Mammary epithelial cell (primary cell): ENCODE measurements at regions of chr3 and their contacts with region 1.

Region 1: GRCh38 chr3:160956806-160957205 is 148.3 kb downstream of the B3GALNT1 start:
- DNase-seq: peak; percentile 24
- H3K4me3 ChIP-seq: no peak overlapping the region
- H3K27ac ChIP-seq: no peak overlapping the region
- H3K4me1 ChIP-seq: no peaks in the 10 kb centered on the region
- H3K27me3 ChIP-seq: peaks cover 3% of the 10 kb centered on the region
- CTCF ChIP-seq: peak; percentile 43 to 54

Region 2: DNA sequence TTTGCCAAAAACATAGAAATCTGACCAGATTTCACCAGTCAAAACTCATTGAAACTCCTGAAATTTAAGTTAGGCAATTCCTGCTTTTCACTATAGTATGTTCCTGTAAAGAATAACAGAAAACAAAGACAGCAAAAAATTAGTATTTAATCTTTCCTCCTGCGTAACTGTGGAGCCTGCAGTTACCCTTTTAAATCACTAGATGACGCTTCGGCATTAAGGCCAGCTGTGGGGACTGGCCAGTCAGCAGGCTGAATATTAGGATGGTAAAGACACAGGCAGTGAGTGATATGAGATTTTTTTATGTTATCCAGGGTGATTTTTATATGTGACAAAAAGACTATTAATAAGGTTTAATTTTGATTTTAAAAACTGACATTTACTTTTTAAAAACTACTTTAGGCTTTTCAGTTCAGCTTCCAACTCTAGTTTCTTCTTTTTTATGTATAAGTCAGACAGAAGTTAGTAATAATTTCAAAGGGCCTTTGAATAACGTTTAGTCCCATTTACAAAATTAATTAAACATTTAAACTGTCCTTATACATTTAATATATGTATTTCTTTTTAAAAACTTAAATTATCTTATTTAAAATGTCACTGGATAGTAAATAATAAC is 35.7 kb before region 1 on chr3:
- CTCF ChIA-PET with region 1: no interaction called
- dilution Hi-C with region 1: no loop called
- in situ Hi-C with region 1: no loop called
- intact Hi-C with region 1: no loop called
- DNase-seq: peak; percentile 8
- H3K4me3 ChIP-seq: no peak overlapping the region
- H3K27ac ChIP-seq: no peak overlapping the region
- H3K4me1 ChIP-seq: no peaks in the 10 kb centered on the region
- H3K27me3 ChIP-seq: no peaks in the 10 kb centered on the region
- CTCF ChIP-seq: peak; percentile 67 to 79

Region 3: GRCh38 chr3:161096771-161097355 is 140.1 kb after region 1 on chr3:
- CTCF ChIA-PET with region 1: no interaction called
- dilution Hi-C with region 1: no loop called
- in situ Hi-C with region 1: no loop called
- intact Hi-C with region 1: no loop called
- DNase-seq: peak; percentile 11
- H3K4me3 ChIP-seq: no peak overlapping the region
- H3K27ac ChIP-seq: no peak overlapping the region
- H3K4me1 ChIP-seq: no peaks in the 10 kb centered on the region
- H3K27me3 ChIP-seq: no peaks in the 10 kb centered on the region
- CTCF ChIP-seq: peak; percentile 26 to 61

Region 4: DNA sequence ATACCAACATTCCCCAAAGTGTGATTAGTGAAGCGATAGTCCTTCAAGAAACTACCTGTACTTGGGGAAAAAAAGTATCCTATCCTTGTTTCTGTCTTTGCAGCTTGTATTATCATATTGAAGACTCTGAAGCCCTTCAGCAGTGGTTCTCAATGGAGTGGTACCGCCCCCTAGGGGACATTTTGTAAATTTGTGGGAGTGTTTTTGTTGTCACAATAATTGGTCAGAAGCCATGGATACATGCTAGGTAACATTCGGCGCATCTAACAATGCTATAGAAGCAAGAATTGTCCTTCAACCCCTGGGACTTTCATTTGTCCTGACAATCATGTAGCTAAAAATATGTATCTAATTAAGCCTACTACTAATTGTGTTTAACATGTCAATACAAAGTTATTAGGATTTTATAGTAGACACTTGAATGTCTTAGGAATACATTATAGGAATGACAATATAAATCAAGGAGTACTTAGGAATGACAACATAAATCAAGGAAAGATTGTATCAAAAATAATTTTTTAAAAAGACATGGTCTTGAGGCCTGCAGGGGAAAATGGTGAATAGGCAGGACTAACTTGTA is 318.0 kb after region 1 on chr3:
- CTCF ChIA-PET with region 1: interaction called, 5 read pairs
- dilution Hi-C with region 1: no loop called
- in situ Hi-C with region 1: no loop called
- intact Hi-C with region 1: loop called (anchors 2 kb)
- DNase-seq: peak; percentile 55
- H3K4me3 ChIP-seq: no peak overlapping the region
- H3K27ac ChIP-seq: no peak overlapping the region
- H3K4me1 ChIP-seq: peaks cover 5% of the 10 kb centered on the region
- H3K27me3 ChIP-seq: no peaks in the 10 kb centered on the region
- CTCF ChIP-seq: peak; percentile 66 to 80

Region 5: DNA sequence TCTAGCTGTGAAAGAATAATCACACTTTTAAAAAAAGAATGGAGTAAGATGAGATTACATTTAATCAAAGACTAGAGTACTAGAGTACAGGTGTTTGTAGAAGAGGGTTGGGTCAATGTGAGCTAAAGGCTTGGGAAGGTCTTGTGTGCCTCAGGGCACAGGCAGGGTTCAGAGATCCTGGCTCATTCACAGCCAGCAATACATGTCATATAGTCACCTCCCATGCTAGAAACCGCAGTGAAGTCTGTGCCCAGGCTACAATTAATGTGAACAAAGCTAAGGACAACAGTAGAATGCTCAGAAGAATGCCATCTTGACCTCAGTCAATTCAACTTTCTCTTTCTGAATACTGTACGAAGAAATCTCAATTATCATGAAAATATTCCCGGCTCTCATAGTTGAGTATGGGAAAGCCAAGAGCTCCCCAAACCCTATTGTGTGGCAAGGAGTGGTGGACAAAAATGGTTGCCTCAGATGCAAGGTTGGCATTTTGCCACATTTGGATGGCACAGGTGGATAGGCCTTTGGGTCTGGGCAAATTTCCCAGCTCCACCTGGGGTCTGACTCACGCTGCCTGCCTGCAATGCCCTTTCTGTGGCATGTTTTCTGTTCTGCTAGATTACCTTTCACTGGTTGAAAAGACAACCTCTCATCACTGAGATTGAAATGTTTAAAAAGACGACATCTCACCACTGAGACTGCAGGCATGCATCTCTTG is 334.5 kb after region 1 on chr3:
- CTCF ChIA-PET with region 1: interaction called, 34 read pairs
- dilution Hi-C with region 1: no loop called
- in situ Hi-C with region 1: no loop called
- intact Hi-C with region 1: no loop called
- DNase-seq: peak; percentile 85
- H3K4me3 ChIP-seq: no peak overlapping the region
- H3K27ac ChIP-seq: no peak overlapping the region
- H3K4me1 ChIP-seq: peaks cover 17% of the 10 kb centered on the region
- H3K27me3 ChIP-seq: no peaks in the 10 kb centered on the region
- CTCF ChIP-seq: no peak

Region 6: GRCh38 chr3:161449787-161450186 is 493.0 kb after region 1 on chr3:
- CTCF ChIA-PET with region 1: no interaction called
- dilution Hi-C with region 1: no loop called
- in situ Hi-C with region 1: loop called in 1 of 2 experiments (anchors 25 kb)
- intact Hi-C with region 1: no loop called
- DNase-seq: no peak
- H3K4me3 ChIP-seq: no peak overlapping the region
- H3K27ac ChIP-seq: no peak overlapping the region
- H3K4me1 ChIP-seq: no peaks in the 10 kb centered on the region
- H3K27me3 ChIP-seq: no peaks in the 10 kb centered on the region
- CTCF ChIP-seq: peak in 1 of 2 donors; percentile 13

Region 7: GRCh38 chr3:161657786-161658185 is 701.0 kb after region 1 on chr3:
- CTCF ChIA-PET with region 1: no interaction called
- dilution Hi-C with region 1: no loop called
- in situ Hi-C with region 1: no loop called
- intact Hi-C with region 1: no loop called
- DNase-seq: no peak
- H3K4me3 ChIP-seq: no peak overlapping the region
- H3K27ac ChIP-seq: no peak overlapping the region
- H3K4me1 ChIP-seq: no peaks in the 10 kb centered on the region
- H3K27me3 ChIP-seq: no peaks in the 10 kb centered on the region
- CTCF ChIP-seq: no peak